ENCODE measurements at regions of chr13 and their contacts with region 1.

Region 1: DNA sequence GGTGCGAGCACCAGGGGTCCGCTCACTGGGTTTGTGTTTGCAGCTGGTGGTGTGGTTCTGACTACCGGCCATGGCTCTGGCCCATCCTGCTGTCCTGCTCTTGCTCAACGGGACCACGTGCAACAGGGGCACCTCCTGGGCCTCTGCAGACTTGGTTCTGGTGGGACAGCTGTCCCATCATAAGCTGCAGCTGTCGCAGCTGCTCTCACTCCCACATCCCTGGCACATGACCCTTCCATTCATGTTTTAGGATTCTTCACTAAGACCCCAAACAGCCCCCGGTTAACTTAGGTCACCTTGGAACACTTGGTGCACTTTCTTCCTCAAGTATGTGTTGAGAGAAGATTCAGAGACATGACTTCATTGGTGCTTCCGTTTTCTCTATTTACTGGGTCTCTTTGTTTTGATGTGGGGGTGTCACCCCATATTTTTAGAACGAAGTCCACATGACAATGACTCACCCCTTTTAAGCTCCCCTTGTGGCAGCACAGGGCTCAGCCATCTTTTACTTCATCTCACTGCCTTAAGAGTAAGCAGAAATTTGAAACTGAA is 68.4 kb upstream of the ARHGEF7 start:
- DNase-seq: no peak

Region 2: DNA sequence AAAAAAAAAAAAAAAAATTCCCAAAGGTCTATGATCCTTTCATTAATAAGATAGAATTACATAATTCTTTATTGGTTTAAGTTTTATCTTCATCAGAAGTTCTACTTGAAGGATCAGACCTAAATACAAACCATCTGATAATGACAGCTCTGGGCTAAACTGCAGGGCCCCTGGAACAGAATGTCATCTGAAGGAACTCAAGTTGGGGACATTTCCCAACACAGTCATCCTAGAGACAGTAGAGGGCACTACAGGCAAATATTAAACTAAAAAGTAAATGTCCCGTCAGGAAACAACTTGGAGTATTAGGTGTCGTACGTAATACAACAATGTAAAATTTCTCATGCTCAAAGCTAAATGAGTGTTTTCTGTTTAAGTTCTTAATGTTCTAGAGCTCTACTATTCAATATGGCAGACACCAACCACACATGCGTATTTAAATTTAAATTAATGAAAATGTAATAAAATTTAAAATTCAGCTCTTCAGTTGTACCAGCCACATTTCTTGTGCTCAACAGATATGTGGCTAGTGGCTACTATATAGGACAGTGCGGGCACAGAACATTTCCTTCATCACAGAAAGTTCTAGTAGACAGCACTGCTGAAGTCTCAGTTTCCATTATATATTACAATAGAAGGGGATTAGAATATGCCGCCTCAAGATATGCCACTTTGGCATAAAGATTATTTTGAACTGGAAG is 453.1 kb before region 1 on chr13:
- intact Hi-C with region 1: loop called in 1 of 2 experiments (anchors 5 kb)
- DNase-seq: no peak

Region 3: DNA sequence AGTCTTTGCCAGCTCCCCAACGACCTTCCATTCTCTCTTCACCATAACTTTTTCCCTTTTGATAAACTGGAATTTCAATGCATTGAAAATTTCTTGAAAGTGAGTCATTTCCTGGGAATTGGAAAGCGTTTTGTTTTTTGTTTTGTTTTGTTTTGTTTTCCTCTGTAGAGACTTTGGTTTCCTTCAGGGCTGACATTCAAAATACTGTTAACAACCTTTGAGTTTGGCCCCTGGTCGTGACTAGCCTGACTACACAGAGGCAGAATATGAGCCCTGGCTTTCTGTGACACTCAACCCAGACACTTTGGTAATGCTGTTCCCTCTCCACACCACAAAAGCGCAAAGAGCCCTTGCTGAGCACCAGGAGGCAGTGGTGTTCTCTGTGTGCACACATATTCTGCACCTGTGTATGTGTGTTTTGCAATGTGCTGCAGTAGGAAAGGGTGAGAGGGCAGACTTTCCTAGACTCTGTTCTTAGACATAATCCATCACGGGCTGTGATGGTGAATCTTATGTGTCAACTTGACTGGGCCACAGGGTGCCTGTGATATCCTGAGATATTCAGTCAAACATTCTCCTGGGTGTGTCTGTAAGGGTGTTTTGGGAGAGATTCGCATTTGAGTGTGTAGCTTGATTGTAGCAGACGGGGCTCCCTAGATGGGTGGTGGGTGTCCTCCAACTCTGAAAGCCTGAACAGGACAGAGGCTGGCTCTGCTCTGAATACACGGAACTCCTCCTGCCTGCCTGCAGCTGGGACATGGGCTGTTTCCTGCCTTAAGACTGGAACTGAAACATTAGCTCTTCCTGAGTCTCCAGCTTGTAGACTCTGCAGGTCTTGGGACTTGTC is 102.3 kb before region 1 on chr13:
- intact Hi-C with region 1: loop called in 1 of 2 experiments (anchors 10 kb)
- DNase-seq: no peak

Measured in posterior vena cava (tissue), 2 donors.